Gastrocnemius medialis (tissue), 4 donors: ENCODE measurements at regions of chr7 and their contacts with region 1.

Region 1: GRCh38 chr7:39493934-39494333 is 72.3 kb upstream of the YAE1 start:
- DNase-seq: no peak
- ATAC-seq: no peak
- H3K4me3 ChIP-seq: no peak overlapping the region
- H3K27ac ChIP-seq: no peak overlapping the region
- H3K4me1 ChIP-seq: no peaks in the 10 kb centered on the region
- H3K27me3 ChIP-seq: no peaks in the 10 kb centered on the region
- CTCF ChIP-seq: no peak
- POLR2A ChIP-seq: no peak

Region 2: GRCh38 chr7:39353615-39354376 is 140.1 kb before region 1 on chr7:
- in situ Hi-C with region 1: no loop called
- intact Hi-C with region 1: no loop called
- DNase-seq: no peak
- ATAC-seq: no peak
- H3K4me3 ChIP-seq: no peak overlapping the region
- H3K27ac ChIP-seq: no peak overlapping the region
- H3K4me1 ChIP-seq: no peaks in the 10 kb centered on the region
- H3K27me3 ChIP-seq: no peaks in the 10 kb centered on the region
- CTCF ChIP-seq: no peak
- POLR2A ChIP-seq: no peak

Region 3: GRCh38 chr7:39433550-39433949 is 60.4 kb before region 1 on chr7:
- in situ Hi-C with region 1: no loop called
- intact Hi-C with region 1: no loop called
- DNase-seq: no peak
- ATAC-seq: no peak
- H3K4me3 ChIP-seq: no peak overlapping the region
- H3K27ac ChIP-seq: no peak overlapping the region
- H3K4me1 ChIP-seq: no peaks in the 10 kb centered on the region
- H3K27me3 ChIP-seq: no peaks in the 10 kb centered on the region
- CTCF ChIP-seq: no peak
- POLR2A ChIP-seq: no peak

Region 4: DNA sequence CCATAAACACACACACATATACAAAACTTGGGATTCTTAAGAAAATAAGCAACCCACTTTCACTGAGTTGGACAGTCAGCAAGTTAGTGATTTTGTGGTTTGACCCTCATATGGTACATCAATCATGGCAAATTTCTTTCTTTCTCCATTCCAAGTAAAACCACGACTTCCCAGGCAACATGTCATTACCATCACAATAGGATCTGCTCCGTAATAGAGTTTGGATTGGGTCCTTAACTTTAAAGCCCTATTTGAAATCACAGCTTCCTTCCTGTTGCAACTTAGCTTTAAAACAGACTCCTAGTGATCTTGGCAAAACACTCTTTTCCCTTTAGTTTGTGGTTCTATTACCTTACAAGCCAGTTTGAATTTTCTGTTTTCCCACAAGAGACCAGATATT is 1725.3 kb after region 1 on chr7:
- in situ Hi-C with region 1: no loop called
- intact Hi-C with region 1: loop called (anchors 10 kb)
- DNase-seq: no peak
- ATAC-seq: no peak
- H3K4me3 ChIP-seq: no peak overlapping the region
- H3K27ac ChIP-seq: no peak overlapping the region
- H3K4me1 ChIP-seq: no peaks in the 10 kb centered on the region
- H3K27me3 ChIP-seq: no peaks in the 10 kb centered on the region
- CTCF ChIP-seq: no peak
- POLR2A ChIP-seq: no peak